ENCODE measurements at regions of chr4 and their contacts with region 1.

Region 1: GRCh38 chr4:41692717-41693345 is 55.7 kb downstream of the PHOX2B start:
- DNase-seq: peak; percentile 46
- ATAC-seq: peak; percentile 91
- H3K4me3 ChIP-seq: no peak overlapping the region
- H3K27ac ChIP-seq: no peak overlapping the region
- H3K4me1 ChIP-seq: peaks cover 0 to 3% of the 10 kb centered on the region in 2 experiments; a peak in 1 of 4 replicates
- H3K27me3 ChIP-seq: no peaks in the 10 kb centered on the region
- CTCF ChIP-seq: peak; percentile 82 to 94 (median 88)
- POLR2A ChIP-seq: no peak
- RAD21 ChIP-seq: peak; percentile 89

Region 2: DNA sequence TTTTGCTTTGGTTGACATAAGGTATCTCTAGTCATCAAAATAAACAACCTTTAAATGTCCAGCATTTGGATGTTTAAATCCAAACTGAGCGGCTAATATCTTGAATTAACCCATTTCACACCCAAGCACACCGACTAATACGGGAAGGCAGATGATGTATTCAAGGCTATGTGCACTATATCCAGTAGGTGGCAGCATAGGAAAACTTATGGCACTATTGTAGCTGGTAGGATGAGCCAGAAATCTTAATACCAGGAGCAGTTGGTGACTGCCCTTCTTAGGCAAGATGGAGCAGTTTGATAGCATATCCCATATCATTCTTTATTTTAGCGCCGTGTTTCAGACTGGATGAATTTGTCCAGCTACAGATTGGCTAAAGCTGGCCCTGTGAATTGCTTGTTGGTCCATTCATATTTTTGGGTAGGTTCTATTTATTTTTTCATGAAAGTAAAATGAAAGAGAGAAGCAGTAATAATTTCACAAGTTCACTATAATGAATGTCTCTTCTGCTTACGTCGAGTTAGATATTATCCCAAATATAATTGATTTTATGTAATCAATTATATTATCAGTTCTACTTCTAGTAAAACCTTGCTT is 411.7 kb before region 1 on chr4:
- CTCF ChIA-PET with region 1: interaction called, 12 read pairs
- POLR2A ChIA-PET with region 1: no interaction called
- RAD21 ChIA-PET with region 1: no interaction called
- intact Hi-C with region 1: loop called (anchors 1 kb)
- DNase-seq: peak; percentile 82
- ATAC-seq: peak; percentile 100
- H3K4me3 ChIP-seq: no peak overlapping the region
- H3K27ac ChIP-seq: no peak overlapping the region
- H3K4me1 ChIP-seq: no peaks in the 10 kb centered on the region
- H3K27me3 ChIP-seq: no peaks in the 10 kb centered on the region
- CTCF ChIP-seq: peak; percentile 75 to 91 (median 90)
- POLR2A ChIP-seq: no peak
- RAD21 ChIP-seq: peak; percentile 99

Region 3: GRCh38 chr4:41853973-41854372 is 161.1 kb after region 1 on chr4:
- CTCF ChIA-PET with region 1: no interaction called
- POLR2A ChIA-PET with region 1: no interaction called
- RAD21 ChIA-PET with region 1: no interaction called
- intact Hi-C with region 1: no loop called
- DNase-seq: no peak
- ATAC-seq: no peak; the same call in 1 of the 2 replicates
- H3K4me3 ChIP-seq: no peak overlapping the region
- H3K27ac ChIP-seq: no peak overlapping the region
- H3K4me1 ChIP-seq: no peaks in the 10 kb centered on the region
- H3K27me3 ChIP-seq: no peaks in the 10 kb centered on the region
- CTCF ChIP-seq: peak; percentile 29 to 61 (median 46); a peak in 5 of 6 replicates
- POLR2A ChIP-seq: no peak
- RAD21 ChIP-seq: peak; percentile 35

Region 4: DNA sequence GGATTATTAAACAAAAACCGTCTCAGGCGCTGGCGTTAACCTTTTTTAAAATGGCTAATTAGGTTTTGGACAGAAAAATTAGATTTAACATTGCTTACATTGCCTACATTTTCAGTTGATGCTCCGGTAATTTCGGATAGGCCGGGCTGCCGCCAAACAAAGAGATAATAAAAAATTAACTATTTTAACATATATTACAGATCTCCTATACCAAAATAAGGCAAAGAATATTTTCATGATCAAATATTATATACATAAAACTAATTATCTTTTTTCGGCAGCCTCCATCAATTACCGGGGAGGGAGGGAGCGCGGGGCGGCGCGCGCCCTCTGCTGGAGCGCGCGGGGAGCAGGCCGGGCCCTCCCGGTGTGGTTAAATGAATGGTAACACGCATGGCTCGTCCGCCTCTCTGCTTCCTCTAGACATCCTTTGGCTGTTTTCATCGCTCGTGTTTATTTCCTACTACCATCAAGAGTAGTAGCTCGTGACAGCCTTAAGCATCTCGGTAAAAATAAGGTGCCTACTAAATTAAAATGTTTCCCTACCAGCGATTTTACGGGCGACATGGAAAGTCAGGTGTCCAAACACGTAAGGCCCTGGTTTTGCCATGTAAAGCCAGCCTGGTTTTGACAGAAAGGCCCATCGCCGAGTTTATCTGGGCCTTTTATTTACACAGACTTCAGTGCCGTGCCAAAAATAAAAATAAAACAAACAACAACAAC is 190.0 kb after region 1 on chr4:
- CTCF ChIA-PET with region 1: interaction called, 13 read pairs
- POLR2A ChIA-PET with region 1: no interaction called
- RAD21 ChIA-PET with region 1: no interaction called
- intact Hi-C with region 1: loop called (anchors 1 kb)
- DNase-seq: no peak
- ATAC-seq: peak; percentile 96
- H3K4me3 ChIP-seq: no peak overlapping the region
- H3K27ac ChIP-seq: no peak overlapping the region
- H3K4me1 ChIP-seq: no peaks in the 10 kb centered on the region
- H3K27me3 ChIP-seq: no peaks in the 10 kb centered on the region
- CTCF ChIP-seq: peak; percentile 71 to 96 (median 85)
- POLR2A ChIP-seq: no peak
- RAD21 ChIP-seq: peak; percentile 62

Region 5: DNA sequence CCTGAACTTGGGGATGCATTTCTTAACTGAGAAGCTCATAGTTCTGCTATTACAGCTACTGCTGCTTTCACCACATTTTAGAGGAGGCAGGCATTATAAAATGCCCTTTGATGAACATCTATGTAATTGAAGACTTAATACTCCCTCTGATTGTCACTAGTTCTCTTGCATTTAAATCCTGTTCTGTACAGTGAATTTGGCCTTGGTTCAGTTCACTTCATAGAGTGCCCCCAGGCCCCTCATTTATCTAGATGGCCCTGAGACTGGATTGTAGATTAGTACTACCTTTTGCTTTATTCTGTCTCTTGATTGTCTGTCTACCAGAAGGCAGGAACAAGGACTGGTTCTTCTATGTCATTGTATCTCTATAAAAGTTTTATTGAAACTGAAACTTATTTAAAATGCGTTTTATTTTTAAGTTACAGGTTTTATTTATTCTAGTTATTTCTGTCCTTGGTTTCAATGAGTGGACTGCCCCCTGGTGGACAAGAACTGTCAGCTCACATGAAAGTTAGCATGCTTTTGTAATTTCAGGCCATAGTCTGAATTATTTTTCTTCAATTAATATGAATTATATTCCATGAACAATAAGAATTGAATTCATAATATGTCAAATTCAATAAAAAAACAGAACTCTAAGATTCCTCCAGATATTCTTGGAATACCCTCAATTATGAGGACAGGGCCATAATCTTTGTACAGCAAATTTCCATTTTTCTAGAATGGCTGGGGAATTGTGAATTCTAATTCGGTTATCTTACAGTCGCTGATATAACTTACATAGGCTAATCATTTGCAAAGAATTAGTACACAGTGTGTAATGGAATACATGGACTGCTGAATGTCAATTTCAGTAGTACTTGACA is 195.2 kb after region 1 on chr4:
- CTCF ChIA-PET with region 1: interaction called, 13 read pairs
- POLR2A ChIA-PET with region 1: no interaction called
- RAD21 ChIA-PET with region 1: no interaction called
- intact Hi-C with region 1: loop called (anchors 1 kb)
- DNase-seq: peak; percentile 34
- ATAC-seq: no peak
- H3K4me3 ChIP-seq: no peak overlapping the region
- H3K27ac ChIP-seq: no peak overlapping the region
- H3K4me1 ChIP-seq: no peaks in the 10 kb centered on the region; a peak in 1 of 4 replicates
- H3K27me3 ChIP-seq: no peaks in the 10 kb centered on the region
- CTCF ChIP-seq: peak; percentile 74 to 90 (median 82)
- POLR2A ChIP-seq: no peak
- RAD21 ChIP-seq: peak; percentile 76

Region 6: DNA sequence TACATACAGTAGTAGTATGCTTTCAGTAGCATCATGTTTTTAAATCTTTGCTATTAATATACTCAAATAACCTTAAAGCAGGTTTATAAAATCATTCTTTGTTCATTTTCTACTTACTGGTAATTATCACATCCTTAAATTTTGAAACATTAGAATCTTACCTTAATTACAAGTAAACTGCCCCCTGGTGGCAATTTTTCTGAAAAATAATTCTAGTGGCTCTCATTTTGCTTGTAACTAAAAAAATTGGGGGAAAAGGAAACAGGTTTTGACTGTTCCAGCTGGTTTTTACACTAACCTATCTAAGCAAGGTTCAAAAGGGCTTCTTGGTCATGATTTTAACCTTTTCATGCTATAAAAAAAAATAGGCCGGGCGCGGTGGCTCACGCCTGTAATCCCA is 270.3 kb after region 1 on chr4:
- CTCF ChIA-PET with region 1: interaction called, 3 read pairs
- POLR2A ChIA-PET with region 1: no interaction called
- RAD21 ChIA-PET with region 1: no interaction called
- intact Hi-C with region 1: loop called (anchors 1 kb)
- DNase-seq: peak; percentile 10
- ATAC-seq: no peak
- H3K4me3 ChIP-seq: no peak overlapping the region
- H3K27ac ChIP-seq: no peak overlapping the region
- H3K4me1 ChIP-seq: no peaks in the 10 kb centered on the region
- H3K27me3 ChIP-seq: no peaks in the 10 kb centered on the region
- CTCF ChIP-seq: peak; percentile 19 to 58 (median 40); a peak in 4 of 6 replicates
- POLR2A ChIP-seq: no peak
- RAD21 ChIP-seq: no peak

Region 7: DNA sequence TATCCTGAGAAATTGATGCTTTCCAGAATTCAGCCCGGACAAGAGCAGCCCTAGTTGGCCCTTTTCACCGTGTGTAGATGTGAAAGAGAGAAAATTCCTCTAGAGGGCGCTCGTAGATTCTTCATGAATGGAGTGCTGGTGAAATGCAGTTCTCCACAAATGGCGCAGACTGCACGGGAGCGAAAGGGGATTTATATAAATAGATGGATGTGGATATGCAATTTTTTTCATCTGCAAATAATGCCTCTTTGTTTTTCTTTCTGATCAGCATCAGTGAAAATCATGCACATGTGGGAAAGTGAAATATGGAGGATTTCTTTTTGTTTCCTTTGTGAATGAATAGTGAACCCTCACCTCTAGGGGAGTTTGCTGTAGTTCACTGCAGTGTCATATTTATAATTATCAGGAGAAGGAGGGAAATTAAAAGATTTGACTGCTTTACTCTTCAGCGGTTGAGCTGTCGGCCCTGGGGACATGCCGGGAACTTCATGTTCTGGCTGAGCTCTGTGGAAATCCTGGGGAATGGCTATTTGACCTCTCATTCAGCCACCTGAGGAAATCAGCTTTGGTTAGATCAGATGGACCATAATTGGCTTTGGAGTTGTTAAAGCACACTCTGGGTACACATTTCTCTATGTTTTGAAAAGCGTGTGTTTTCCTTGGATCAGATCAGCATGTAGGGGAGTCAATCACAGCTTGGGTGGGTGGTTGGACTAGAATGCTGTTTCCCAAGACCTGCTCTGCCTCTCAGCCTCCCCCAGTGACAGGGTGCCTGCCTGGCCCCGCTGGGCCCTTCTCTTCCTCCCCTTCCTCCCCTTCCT is 589.5 kb after region 1 on chr4:
- CTCF ChIA-PET with region 1: no interaction called
- POLR2A ChIA-PET with region 1: no interaction called
- RAD21 ChIA-PET with region 1: no interaction called
- intact Hi-C with region 1: loop called (anchors 1 kb)
- DNase-seq: peak; percentile 76
- ATAC-seq: peak; percentile 90
- H3K4me3 ChIP-seq: no peak overlapping the region; a peak in 1 of 4 replicates
- H3K27ac ChIP-seq: no peak overlapping the region
- H3K4me1 ChIP-seq: peaks cover 0 to 7% of the 10 kb centered on the region in 2 experiments; a peak in 1 of 4 replicates
- H3K27me3 ChIP-seq: no peaks in the 10 kb centered on the region
- CTCF ChIP-seq: peak; percentile 56 to 85 (median 81)
- POLR2A ChIP-seq: no peak
- RAD21 ChIP-seq: peak; percentile 85

Region 8: GRCh38 chr4:42519803-42520417 is 827.1 kb after region 1 on chr4:
- CTCF ChIA-PET with region 1: interaction called, 6 read pairs
- POLR2A ChIA-PET with region 1: no interaction called
- RAD21 ChIA-PET with region 1: no interaction called
- intact Hi-C with region 1: loop called (anchors 5 kb)
- DNase-seq: peak; percentile 28
- ATAC-seq: peak; percentile 86
- H3K4me3 ChIP-seq: no peak overlapping the region
- H3K27ac ChIP-seq: no peak overlapping the region
- H3K4me1 ChIP-seq: no peaks in the 10 kb centered on the region
- H3K27me3 ChIP-seq: peaks cover 3% of the 10 kb centered on the region; the same call in 1 of the 2 replicates
- CTCF ChIP-seq: peak; percentile 39 to 67 (median 64); a peak in 5 of 6 replicates
- POLR2A ChIP-seq: no peak
- RAD21 ChIP-seq: peak; percentile 71

Measured in HCT116 (cell line).